SK-N-SH (cell line): ENCODE measurements at regions of chr11 and their contacts with region 1.

Region 1: GRCh38 chr11:77547863-77548551 is 41.7 kb upstream of the AQP11 start:
- DNase-seq: peak; percentile 50
- H3K4me3 ChIP-seq: no peak overlapping the region
- H3K27ac ChIP-seq: no peak overlapping the region
- H3K4me1 ChIP-seq: no peaks in the 10 kb centered on the region
- H3K27me3 ChIP-seq: no peaks in the 10 kb centered on the region
- CTCF ChIP-seq: peak; percentile 77
- EP300 ChIP-seq: no peak
- RAD21 ChIP-seq: peak; percentile 91

Region 2: DNA sequence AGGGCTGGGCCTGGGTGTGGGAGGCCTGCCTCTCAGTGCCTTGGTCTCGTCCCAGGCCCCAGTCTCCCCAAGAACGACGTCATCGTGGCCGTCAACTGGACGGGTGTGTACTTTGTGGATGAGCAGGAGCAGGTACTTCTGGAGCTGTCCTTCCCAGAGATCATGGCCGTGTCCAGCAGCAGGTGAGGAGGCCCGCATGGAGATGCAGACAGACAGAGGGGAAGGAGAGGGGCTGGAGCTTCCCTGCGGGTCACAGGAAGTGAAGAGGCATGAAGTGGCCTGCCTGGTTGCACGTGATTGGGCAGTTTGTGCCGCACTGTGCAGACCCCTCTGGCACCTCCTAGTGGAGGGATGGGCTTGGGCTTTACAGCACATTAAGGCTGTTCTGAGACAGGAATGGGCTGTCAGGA is 349.6 kb before region 1 on chr11:
- CTCF ChIA-PET with region 1: interaction called, 52 read pairs
- POLR2A ChIA-PET with region 1: no interaction called
- DNase-seq: peak; percentile 62
- H3K4me3 ChIP-seq: no peak overlapping the region
- H3K27ac ChIP-seq: no peak overlapping the region
- H3K4me1 ChIP-seq: no peaks in the 10 kb centered on the region
- H3K27me3 ChIP-seq: no peaks in the 10 kb centered on the region
- CTCF ChIP-seq: peak; percentile 41
- EP300 ChIP-seq: no peak
- RAD21 ChIP-seq: peak; percentile 24

Region 3: GRCh38 chr11:77320351-77320750 is 227.7 kb before region 1 on chr11:
- CTCF ChIA-PET with region 1: interaction called, 10 read pairs
- POLR2A ChIA-PET with region 1: no interaction called
- DNase-seq: no peak
- H3K4me3 ChIP-seq: no peak overlapping the region
- H3K27ac ChIP-seq: no peak overlapping the region
- H3K4me1 ChIP-seq: no peaks in the 10 kb centered on the region
- H3K27me3 ChIP-seq: no peaks in the 10 kb centered on the region
- CTCF ChIP-seq: no peak
- EP300 ChIP-seq: no peak
- RAD21 ChIP-seq: no peak

Region 4: DNA sequence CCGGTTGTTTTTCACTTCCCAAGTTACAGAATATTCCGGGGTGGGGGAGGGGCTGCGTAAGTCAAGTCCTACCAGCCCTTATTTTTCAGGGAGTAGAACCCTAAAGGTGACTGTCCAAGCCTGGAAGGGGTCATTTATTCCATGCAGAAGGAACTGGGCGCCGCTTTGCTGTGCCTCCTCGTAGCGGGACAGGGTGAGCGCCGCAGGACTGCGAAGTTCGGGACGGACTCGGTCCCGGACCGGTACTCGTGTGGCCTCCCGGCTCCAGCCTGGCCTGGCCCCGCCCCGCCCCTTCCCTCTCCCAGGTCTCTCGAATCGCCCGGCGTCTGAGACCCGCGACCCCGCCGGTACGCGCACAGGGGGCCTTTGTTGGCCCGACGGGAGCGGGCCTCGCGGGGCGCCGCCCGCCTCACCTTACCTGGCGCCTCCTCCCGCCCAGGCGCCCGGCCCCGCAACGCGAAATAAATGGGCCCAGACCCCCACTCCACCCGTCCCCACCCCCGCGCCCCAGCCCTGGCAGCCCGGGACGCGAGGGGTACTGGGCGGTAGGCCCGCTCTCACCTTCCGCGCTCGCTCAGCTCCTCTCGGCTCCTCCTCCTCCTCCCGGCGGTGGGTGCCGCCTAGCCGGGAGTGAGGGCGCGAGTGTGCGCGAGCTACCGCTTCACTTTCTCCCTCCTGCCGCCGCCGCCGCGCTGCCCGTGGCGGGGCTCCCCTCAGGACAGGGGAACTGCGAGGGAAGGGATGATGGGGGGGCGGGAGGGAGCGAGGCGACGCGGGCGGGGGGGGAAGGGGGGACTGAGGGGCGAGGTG is 74.8 kb before region 1 on chr11:
- CTCF ChIA-PET with region 1: interaction called, 40 read pairs
- POLR2A ChIA-PET with region 1: no interaction called
- DNase-seq: peak; percentile 78
- H3K4me3 ChIP-seq: peak overlapping the region; percentile 67 to 69
- H3K27ac ChIP-seq: peak overlapping the region in 1 of 2 experiments; percentile 74; a peak in 2 of 4 replicates
- H3K4me1 ChIP-seq: peaks cover 0 to 5% of the 10 kb centered on the region in 2 experiments; a peak in 1 of 4 replicates
- H3K27me3 ChIP-seq: no peaks in the 10 kb centered on the region
- CTCF ChIP-seq: no peak
- EP300 ChIP-seq: no peak
- RAD21 ChIP-seq: no peak

Region 5: DNA sequence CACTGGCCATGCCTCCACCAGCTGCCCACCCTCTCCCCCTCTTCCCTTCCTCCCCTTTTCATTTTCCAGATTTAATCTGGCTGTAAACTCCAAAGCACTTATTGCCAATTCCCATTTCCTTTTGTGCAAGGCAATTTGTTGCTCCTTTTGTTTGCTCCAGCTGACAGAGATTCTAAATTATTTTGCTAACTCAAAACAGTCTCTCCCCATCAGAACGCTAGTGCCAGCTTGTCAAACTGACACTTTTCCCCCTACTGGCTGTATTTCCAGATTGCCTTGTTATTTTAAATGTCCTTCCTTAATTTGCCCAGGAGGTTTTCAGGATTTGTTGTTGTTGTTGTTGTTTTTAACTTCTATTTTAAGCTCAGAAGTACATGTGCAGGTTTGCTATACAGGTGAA is 17.1 kb before region 1 on chr11:
- CTCF ChIA-PET with region 1: interaction called, 31 read pairs
- POLR2A ChIA-PET with region 1: no interaction called
- DNase-seq: peak; percentile 52
- H3K4me3 ChIP-seq: no peak overlapping the region
- H3K27ac ChIP-seq: no peak overlapping the region
- H3K4me1 ChIP-seq: peaks cover 0 to 2% of the 10 kb centered on the region in 2 experiments; a peak in 1 of 4 replicates
- H3K27me3 ChIP-seq: no peaks in the 10 kb centered on the region
- CTCF ChIP-seq: peak; percentile 21; the same call in 1 of the 2 replicates
- EP300 ChIP-seq: peak in 1 of 2 experiments; percentile 41; a peak in 1 of 4 replicates
- RAD21 ChIP-seq: no peak

Region 6: GRCh38 chr11:77568916-77569675 is 21.1 kb after region 1 on chr11:
- CTCF ChIA-PET with region 1: interaction called, 12 read pairs
- POLR2A ChIA-PET with region 1: no interaction called
- DNase-seq: no peak
- H3K4me3 ChIP-seq: no peak overlapping the region
- H3K27ac ChIP-seq: no peak overlapping the region
- H3K4me1 ChIP-seq: no peaks in the 10 kb centered on the region
- H3K27me3 ChIP-seq: no peaks in the 10 kb centered on the region
- CTCF ChIP-seq: no peak
- EP300 ChIP-seq: no peak
- RAD21 ChIP-seq: no peak

Region 7: DNA sequence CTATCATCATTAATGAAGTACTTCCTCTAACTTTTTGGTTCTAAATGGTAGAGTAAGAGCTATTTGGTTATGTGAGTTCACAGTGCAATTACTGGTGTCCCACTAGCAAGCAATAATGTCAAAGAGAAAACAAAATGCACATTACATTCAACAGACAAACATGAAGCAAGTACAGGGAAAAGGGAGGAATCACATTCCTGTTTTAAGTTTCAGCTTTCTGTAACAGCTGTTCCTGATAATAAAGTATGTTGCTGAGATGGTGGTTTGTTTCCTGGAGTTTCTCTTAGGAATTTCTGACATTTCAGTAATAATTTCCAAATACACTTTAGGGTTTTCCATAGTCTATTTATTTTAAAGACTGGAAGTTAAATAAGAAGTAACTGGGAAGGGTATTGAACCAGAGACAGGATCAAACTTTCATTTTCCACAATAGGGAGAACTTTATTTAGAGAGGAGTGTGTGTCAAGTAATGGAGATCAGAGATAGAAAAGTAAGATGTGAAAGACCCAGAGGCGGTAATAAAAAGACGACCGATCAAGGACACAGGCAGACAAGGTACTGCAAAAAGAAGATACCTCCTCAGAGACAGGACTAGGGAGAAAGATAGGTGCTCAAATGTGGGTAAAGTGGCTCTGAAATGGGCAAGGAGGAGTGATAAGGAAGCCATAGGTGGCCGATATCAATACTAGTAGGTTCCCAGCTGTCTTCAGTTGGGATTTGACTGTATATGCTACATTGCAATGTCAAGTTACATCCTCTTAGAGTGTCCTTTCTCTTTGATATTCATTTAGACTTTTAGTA is 110.4 kb after region 1 on chr11:
- CTCF ChIA-PET with region 1: no interaction called
- POLR2A ChIA-PET with region 1: no interaction called
- DNase-seq: no peak
- H3K4me3 ChIP-seq: no peak overlapping the region
- H3K27ac ChIP-seq: peak overlapping the region; percentile 56 to 74; a peak in 3 of 4 replicates
- H3K4me1 ChIP-seq: no peaks in the 10 kb centered on the region; a peak in 1 of 4 replicates
- H3K27me3 ChIP-seq: no peaks in the 10 kb centered on the region
- CTCF ChIP-seq: no peak
- EP300 ChIP-seq: no peak
- RAD21 ChIP-seq: no peak